PC-3 (cell line): ENCODE measurements at regions of chr12 and their contacts with region 1.

Region 1: DNA sequence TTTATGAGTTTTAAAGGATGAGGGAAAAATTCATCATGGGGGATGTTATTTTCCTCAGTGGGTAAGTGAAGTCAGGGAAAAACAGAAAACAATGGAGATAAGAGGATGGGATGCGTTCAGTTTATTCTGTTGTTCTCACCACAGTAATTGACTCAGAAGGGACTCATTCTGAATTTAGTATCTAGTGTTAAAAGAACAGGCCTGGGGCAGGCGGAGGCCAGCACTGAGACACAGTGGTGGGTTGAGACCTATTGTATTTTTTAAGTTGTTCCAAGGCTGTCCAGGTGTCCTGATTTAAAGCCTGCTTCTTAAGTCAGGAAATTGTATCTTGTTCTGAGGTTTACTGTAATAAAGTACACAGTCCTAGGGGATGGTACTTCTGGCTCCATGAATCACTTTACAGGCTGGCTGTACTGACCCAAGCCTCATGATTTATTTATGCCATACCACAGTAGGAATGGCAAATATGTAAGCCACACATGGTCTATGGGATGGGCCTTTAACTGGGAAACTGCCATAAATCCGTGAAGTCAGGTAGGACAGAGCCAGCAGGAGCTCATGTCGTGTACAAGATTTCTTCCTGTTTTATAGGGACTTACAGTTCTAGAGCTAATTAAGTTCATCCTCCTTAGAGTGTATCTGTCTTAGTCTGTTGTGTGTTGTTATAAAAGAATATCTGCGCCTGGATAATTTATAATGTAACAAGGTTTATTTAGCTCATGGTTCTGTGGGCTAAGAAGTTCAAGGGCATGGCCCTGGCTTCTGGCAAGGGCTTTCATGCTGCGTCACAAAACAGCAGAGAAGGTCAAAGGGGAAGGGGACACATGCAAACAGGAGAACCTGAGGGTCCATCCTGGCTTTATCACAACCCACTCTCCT is 244.1 kb downstream of the FBXL14 start:
- DNase-seq: peak; percentile 88
- ATAC-seq: peak; percentile 99
- H3K4me3 ChIP-seq: no peak overlapping the region; the same call in 1 of the 2 replicates
- H3K27ac ChIP-seq: peak overlapping the region; percentile 54
- H3K4me1 ChIP-seq: peaks cover 15% of the 10 kb centered on the region
- H3K27me3 ChIP-seq: no peaks in the 10 kb centered on the region
- CTCF ChIP-seq: no peak

Region 2: GRCh38 chr12:1069846-1070245 is 280.4 kb before region 1 on chr12:
- CTCF ChIA-PET with region 1: no interaction called
- POLR2A ChIA-PET with region 1: interaction called, 19 read pairs
- intact Hi-C with region 1: no loop called
- DNase-seq: no peak
- ATAC-seq: no peak
- H3K4me3 ChIP-seq: no peak overlapping the region
- H3K27ac ChIP-seq: no peak overlapping the region
- H3K4me1 ChIP-seq: no peaks in the 10 kb centered on the region
- H3K27me3 ChIP-seq: no peaks in the 10 kb centered on the region
- CTCF ChIP-seq: no peak

Region 3: DNA sequence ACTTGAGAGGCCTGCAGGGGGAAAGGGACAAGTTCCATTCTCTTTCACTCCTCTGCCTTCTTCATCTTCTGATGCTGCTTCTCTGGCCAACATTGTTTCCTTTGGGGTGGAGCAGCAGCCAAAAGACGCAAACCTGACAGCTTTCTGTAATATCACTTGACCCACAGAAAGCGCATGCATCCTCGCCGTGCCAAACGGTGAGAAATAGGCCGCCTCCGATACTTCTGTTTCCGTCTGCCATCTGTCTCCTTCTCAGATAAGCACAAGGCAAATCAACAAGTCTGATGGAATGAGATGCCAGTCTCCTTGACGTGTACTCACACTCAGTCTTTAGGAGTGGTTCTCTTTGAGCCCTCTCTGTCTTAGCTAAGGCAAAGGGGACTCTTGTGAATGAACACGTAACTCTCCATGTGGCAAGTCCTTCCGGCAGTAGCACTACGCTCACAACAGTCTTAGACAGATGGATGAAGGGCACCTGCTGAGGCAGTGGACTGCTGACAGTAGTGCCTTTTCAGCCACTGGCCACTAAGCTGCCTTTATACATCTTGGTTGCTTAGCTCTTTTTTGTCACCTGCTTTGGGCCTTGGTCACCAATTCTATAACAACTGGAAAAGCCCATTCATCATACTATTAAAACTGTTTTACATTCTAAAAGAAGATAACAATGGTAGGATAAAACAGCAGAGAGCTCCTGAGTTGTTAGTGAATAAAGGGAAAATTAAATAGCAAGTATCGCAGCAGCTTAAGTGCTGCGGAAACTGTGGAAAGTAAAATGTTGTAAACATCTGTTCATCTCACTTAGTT is 30.1 kb after region 1 on chr12:
- CTCF ChIA-PET with region 1: no interaction called
- POLR2A ChIA-PET with region 1: no interaction called
- intact Hi-C with region 1: no loop called
- DNase-seq: no peak
- ATAC-seq: no peak
- H3K4me3 ChIP-seq: no peak overlapping the region
- H3K27ac ChIP-seq: no peak overlapping the region
- H3K4me1 ChIP-seq: no peaks in the 10 kb centered on the region
- H3K27me3 ChIP-seq: no peaks in the 10 kb centered on the region
- CTCF ChIP-seq: no peak

Region 4: DNA sequence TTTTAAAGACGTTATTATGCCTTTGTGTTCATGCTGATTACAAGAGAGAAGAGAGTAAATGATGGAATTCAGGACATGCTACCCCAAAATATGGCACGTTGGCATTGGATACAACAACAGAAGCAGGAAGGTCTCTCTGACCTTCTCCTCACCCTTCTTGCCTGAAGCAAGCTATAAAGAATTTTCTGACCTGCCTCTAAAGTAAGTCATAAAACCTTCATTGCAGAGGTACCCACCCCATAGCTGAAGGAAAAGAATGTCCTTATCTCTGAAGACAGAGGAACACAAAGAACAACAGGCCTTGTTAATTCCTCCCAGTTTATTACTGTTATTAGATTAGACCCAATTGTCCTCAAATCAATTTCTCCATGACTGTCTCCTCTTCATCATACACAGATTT is 67.8 kb after region 1 on chr12:
- CTCF ChIA-PET with region 1: no interaction called
- POLR2A ChIA-PET with region 1: no interaction called
- intact Hi-C with region 1: no loop called
- DNase-seq: no peak
- ATAC-seq: no peak
- H3K4me3 ChIP-seq: no peak overlapping the region
- H3K27ac ChIP-seq: no peak overlapping the region
- H3K4me1 ChIP-seq: no peaks in the 10 kb centered on the region
- H3K27me3 ChIP-seq: no peaks in the 10 kb centered on the region
- CTCF ChIP-seq: no peak

Region 5: GRCh38 chr12:1588575-1588947 is 238.3 kb after region 1 on chr12:
- CTCF ChIA-PET with region 1: no interaction called
- POLR2A ChIA-PET with region 1: interaction called, 11 read pairs
- intact Hi-C with region 1: no loop called
- DNase-seq: peak; percentile 13
- ATAC-seq: no peak; the same call in 1 of the 2 replicates
- H3K4me3 ChIP-seq: peak overlapping the region; percentile 31; the same call in 1 of the 2 replicates
- H3K27ac ChIP-seq: peak overlapping the region; percentile 45
- H3K4me1 ChIP-seq: peaks cover 40% of the 10 kb centered on the region
- H3K27me3 ChIP-seq: no peaks in the 10 kb centered on the region
- CTCF ChIP-seq: no peak